SK-N-SH (cell line): ENCODE measurements at regions of chr6 and their contacts with region 1.

Region 1: DNA sequence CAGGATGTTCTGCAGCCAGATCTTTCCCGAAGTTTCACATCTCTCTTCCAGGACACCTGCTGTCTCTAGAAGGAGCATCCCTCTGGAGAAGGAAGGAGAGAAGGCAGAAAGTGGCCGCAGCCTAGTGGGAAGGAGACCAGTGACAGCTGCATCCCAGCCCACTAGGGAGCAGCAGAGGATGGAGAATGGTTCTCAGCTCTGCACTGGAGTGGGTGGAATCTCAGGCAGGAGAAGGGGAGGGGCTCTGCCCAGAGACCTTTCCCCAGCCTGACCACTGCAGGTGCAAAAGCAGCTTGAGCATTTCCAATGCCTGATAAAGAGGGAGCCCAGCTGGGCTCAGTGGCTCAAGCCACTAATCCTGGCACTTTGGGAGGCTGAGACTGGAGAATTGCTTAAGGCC is 32.3 kb downstream of the NCR2 start:
- DNase-seq: peak; percentile 85
- H3K4me3 ChIP-seq: no peak overlapping the region; a peak in 1 of 4 replicates
- H3K27ac ChIP-seq: no peak overlapping the region
- H3K4me1 ChIP-seq: peaks cover 0 to 2% of the 10 kb centered on the region in 2 experiments; a peak in 1 of 4 replicates
- H3K27me3 ChIP-seq: peaks cover 56% of the 10 kb centered on the region
- CTCF ChIP-seq: peak; percentile 75
- EP300 ChIP-seq: no peak
- RAD21 ChIP-seq: peak; percentile 93

Region 2: GRCh38 chr6:41271901-41272395 is 95.8 kb before region 1 on chr6:
- CTCF ChIA-PET with region 1: no interaction called
- POLR2A ChIA-PET with region 1: no interaction called
- DNase-seq: no peak
- H3K4me3 ChIP-seq: no peak overlapping the region
- H3K27ac ChIP-seq: no peak overlapping the region
- H3K4me1 ChIP-seq: peaks cover 0 to 8% of the 10 kb centered on the region in 2 experiments; a peak in 2 of 4 replicates
- H3K27me3 ChIP-seq: peaks cover 5% of the 10 kb centered on the region; the same call in 1 of the 2 replicates
- CTCF ChIP-seq: no peak
- EP300 ChIP-seq: no peak
- RAD21 ChIP-seq: no peak

Region 3: GRCh38 chr6:41356790-41357189 is 10.9 kb before region 1 on chr6:
- CTCF ChIA-PET with region 1: interaction called, 24 read pairs
- POLR2A ChIA-PET with region 1: no interaction called
- DNase-seq: no peak
- H3K4me3 ChIP-seq: no peak overlapping the region
- H3K27ac ChIP-seq: no peak overlapping the region
- H3K4me1 ChIP-seq: no peaks in the 10 kb centered on the region
- H3K27me3 ChIP-seq: peaks cover 23% of the 10 kb centered on the region; the same call in 1 of the 2 replicates
- CTCF ChIP-seq: no peak
- EP300 ChIP-seq: no peak
- RAD21 ChIP-seq: no peak

Region 4: GRCh38 chr6:41424370-41425058 is 56.8 kb after region 1 on chr6:
- CTCF ChIA-PET with region 1: interaction called, 50 read pairs
- POLR2A ChIA-PET with region 1: no interaction called
- DNase-seq: peak; percentile 84
- H3K4me3 ChIP-seq: no peak overlapping the region
- H3K27ac ChIP-seq: no peak overlapping the region
- H3K4me1 ChIP-seq: peaks cover 0 to 17% of the 10 kb centered on the region in 2 experiments; a peak in 1 of 4 replicates
- H3K27me3 ChIP-seq: peaks cover 48% of the 10 kb centered on the region
- CTCF ChIP-seq: peak; percentile 85
- EP300 ChIP-seq: no peak
- RAD21 ChIP-seq: peak; percentile 76

Region 5: GRCh38 chr6:41591859-41592502 is 224.3 kb after region 1 on chr6:
- CTCF ChIA-PET with region 1: interaction called, 151 read pairs
- POLR2A ChIA-PET with region 1: no interaction called
- DNase-seq: peak; percentile 92
- H3K4me3 ChIP-seq: peak overlapping the region in 1 of 2 experiments; percentile 28; a peak in 1 of 4 replicates
- H3K27ac ChIP-seq: no peak overlapping the region
- H3K4me1 ChIP-seq: peaks cover 0 to 27% of the 10 kb centered on the region in 2 experiments; a peak in 1 of 4 replicates
- H3K27me3 ChIP-seq: no peaks in the 10 kb centered on the region
- CTCF ChIP-seq: peak; percentile 89
- EP300 ChIP-seq: no peak
- RAD21 ChIP-seq: peak; percentile 92

Region 6: GRCh38 chr6:41655711-41656691 is 288.3 kb after region 1 on chr6:
- CTCF ChIA-PET with region 1: interaction called, 12 read pairs
- POLR2A ChIA-PET with region 1: no interaction called
- DNase-seq: no peak
- H3K4me3 ChIP-seq: no peak overlapping the region
- H3K27ac ChIP-seq: no peak overlapping the region
- H3K4me1 ChIP-seq: peaks cover 0 to 8% of the 10 kb centered on the region in 2 experiments; a peak in 1 of 4 replicates
- H3K27me3 ChIP-seq: no peaks in the 10 kb centered on the region
- CTCF ChIP-seq: no peak
- EP300 ChIP-seq: no peak
- RAD21 ChIP-seq: no peak

Region 7: DNA sequence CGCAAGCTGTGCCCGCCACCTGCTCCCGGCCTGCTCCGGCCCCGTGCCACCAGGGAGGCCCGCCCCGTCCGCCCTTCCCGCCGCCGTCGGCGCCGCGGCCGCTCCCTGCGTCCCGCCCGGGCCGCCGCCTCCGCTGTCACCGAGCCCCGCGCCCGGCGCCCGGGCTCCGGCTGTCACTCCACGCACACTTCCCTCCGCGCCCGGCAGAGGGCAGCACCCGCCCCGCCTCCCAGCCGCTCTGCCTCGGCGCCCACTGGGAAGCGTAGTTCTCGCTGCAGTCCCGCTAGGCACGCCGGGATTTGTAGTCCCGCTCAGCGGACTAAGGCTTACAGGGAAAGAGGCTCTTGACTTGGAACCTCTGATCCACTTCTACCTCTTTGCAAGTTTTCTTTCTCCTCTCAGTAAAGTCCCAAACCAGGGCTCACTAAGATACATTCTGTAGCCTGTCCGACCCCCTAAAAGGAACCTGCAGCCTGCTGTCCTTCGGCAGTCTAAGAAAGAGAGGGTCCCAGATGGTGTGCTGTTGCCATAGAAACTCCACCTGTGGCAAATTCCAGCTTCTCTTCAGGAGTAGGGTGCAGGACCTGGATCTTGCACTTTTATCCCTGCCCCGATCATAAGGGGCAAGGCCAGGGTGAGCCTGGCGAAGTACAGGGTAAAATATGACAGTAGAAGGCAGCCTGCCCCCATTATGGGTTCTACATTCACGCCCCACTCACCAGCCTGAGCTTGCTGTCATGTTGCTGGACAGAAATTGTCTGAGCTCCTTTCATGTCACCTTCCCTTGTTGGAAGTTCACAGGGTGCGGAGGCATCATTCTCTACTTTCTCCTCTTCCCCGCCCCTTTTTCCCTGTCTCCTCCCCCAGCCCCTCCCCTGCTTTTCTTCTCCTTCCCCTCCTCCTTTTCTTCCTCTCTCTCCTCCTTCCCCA is 368.0 kb after region 1 on chr6 and contains the start of gene TFEB:
- CTCF ChIA-PET with region 1: interaction called, 17 read pairs
- POLR2A ChIA-PET with region 1: no interaction called
- DNase-seq: peak; percentile 96
- H3K4me3 ChIP-seq: peak within 1 kb of the TSS; percentile 71 to 72
- H3K27ac ChIP-seq: peak within 1 kb of the TSS; percentile 81 to 96; a peak in 3 of 4 replicates
- H3K4me1 ChIP-seq: peaks cover 23 to 31% of the 10 kb centered on the region in 2 experiments
- H3K27me3 ChIP-seq: no peaks in the 10 kb centered on the region
- CTCF ChIP-seq: peak; percentile 74
- EP300 ChIP-seq: peak in 1 of 2 experiments; percentile 16; a peak in 1 of 4 replicates
- RAD21 ChIP-seq: peak; percentile 63
- polyA plus RNA-seq, gene TFEB: 6.2 and 6.7 TPM in 2 replicates